WTC11 (cell line): ENCODE measurements at regions of chr18 and their contacts with region 1.

Region 1: GRCh38 chr18:623761-624620 is 27.2 kb downstream of the CLUL1 start:
- DNase-seq: peak; percentile 81
- ATAC-seq: peak; percentile 99
- H3K4me3 Mint-ChIP-seq: no peak overlapping the region
- H3K27ac Mint-ChIP-seq: no peak overlapping the region
- H3K4me1 Mint-ChIP-seq: peaks cover 9% of the 10 kb centered on the region
- H3K27me3 Mint-ChIP-seq: no peaks in the 10 kb centered on the region
- CTCF ChIP-seq: peak; percentile 36; the same call in 1 of the 2 replicates

Region 2: GRCh38 chr18:267688-268552 is 356.1 kb before region 1 on chr18 and contains the start of gene THOC1:
- CTCF ChIA-PET with region 1: interaction called, 11 read pairs
- POLR2A ChIA-PET with region 1: no interaction called
- DNase-seq: peak; percentile 95
- ATAC-seq: peak; percentile 88
- H3K4me3 Mint-ChIP-seq: peak within 1 kb of the TSS; percentile 97
- H3K27ac Mint-ChIP-seq: peak within 1 kb of the TSS; percentile 97
- H3K4me1 Mint-ChIP-seq: peaks cover 20% of the 10 kb centered on the region
- H3K27me3 Mint-ChIP-seq: no peaks in the 10 kb centered on the region
- CTCF ChIP-seq: no peak
- total RNA-seq, gene THOC1: 51.1 to 65.8 TPM (median 52.7 TPM) in 3 replicates

Region 3: DNA sequence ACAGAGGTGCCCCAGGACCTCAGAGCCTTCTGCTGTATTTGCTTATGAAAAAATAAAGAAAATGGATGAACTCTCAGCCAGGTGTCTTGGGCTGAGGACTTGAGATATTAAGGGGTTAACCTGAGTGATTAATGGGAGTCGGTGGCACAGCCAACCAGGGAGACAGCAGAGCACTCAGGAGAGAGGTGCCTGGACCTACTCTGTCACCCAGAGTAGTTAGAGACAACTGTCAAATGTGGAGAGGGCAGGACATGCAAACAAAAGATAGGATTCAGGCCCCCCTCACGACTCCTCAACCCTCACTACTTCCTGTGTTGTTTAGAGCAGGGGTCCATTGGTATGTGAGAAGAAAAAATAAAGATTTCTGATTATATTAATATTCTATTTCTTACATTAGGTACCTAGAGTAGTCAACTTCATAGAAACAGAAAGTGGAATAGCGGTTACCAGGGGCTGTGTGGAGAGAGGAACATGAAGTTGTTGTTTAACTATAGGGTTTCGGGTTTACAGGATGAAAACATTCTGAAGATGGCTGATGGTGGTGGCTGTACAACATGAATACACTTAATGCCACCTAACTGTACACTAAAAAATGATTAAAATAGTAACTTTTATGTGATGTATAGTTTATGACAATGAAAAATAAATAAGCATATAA is 72.5 kb before region 1 on chr18:
- CTCF ChIA-PET with region 1: no interaction called
- POLR2A ChIA-PET with region 1: no interaction called
- DNase-seq: no peak
- ATAC-seq: no peak
- H3K4me3 Mint-ChIP-seq: no peak overlapping the region
- H3K27ac Mint-ChIP-seq: no peak overlapping the region
- H3K4me1 Mint-ChIP-seq: 0 out of 2 replicates have a peak, but pooled peaks cover 4% of the 10 kb centered on the region
- H3K27me3 Mint-ChIP-seq: no peaks in the 10 kb centered on the region; the same call in 1 of the 2 replicates
- CTCF ChIP-seq: no peak

Region 4: DNA sequence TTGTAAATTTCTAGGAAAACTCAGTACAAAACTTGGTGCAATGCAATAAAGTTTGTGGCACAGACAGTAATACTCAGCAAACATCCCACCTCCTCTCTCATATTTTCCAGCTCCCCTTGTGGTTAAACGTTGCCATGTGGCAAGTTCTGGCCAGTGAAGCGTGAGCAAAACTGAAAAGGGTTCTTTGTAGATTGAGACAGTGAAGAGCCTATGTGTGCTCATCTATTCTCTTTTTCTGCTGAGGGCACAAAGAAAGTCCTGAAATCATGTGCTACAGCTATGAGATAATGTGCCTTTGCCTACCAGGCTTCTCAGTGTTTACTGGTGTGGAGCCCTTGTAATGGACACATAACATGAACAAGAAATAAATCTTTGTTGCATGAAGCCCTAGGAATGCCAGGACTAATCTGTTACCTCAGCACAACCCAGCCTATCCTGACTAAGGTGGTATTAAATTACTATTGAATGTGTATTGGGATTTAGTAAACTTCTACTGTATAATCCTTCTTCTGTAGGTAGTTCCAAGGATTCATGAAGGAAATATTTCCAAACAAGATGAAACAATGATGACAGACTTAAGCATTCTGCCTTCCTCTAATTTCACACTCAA is 20.5 kb after region 1 on chr18:
- CTCF ChIA-PET with region 1: interaction called, 14 read pairs
- POLR2A ChIA-PET with region 1: no interaction called
- DNase-seq: no peak
- ATAC-seq: no peak
- H3K4me3 Mint-ChIP-seq: no peak overlapping the region
- H3K27ac Mint-ChIP-seq: no peak overlapping the region
- H3K4me1 Mint-ChIP-seq: peaks cover 14% of the 10 kb centered on the region
- H3K27me3 Mint-ChIP-seq: no peaks in the 10 kb centered on the region
- CTCF ChIP-seq: no peak

Region 5: DNA sequence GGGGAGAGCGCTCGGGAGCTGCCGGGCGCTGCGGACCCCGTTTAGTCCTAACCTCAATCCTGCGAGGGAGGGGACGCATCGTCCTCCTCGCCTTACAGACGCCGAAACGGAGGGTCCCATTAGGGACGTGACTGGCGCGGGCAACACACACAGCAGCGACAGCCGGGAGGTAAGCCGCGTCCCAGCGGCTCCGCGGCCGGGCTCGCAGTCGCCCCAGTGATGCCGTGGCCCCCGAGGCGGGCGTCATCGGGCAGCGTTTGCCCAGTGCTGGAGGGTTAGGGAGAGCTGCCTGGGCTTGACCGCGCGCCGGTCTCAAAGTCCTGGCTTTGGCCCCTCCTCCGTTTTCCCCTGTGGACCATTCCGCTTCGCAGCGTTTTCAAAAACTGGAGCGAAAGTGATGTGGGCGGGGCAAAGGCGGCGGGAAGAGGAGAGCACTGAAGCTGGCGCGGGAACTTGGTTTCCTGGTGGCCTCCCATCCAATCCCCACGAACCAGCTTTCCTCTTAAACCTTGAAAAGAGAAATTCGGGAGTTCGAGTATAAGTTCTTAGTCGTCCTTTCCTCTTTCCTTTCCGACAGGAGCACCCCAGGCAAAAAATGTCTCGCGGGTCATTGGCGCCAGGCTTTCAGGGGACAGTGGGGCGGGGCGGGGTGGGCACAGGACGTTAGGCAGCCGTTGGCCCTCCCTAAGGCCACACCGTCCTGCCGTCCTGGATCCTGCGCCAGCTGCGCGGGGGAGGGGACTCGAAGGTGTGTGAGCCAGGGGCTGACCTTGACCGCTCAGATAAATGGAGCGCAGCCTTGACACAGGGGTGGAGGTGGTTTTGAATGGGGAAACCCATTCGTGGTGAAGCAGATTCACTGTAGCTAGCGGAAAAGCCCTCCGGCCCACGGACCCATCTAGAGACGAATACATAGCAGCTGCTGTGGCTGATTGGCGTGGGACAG is 34.3 kb after region 1 on chr18:
- CTCF ChIA-PET with region 1: interaction called, 30 read pairs
- POLR2A ChIA-PET with region 1: interaction called, 3 read pairs
- DNase-seq: peak; percentile 90
- ATAC-seq: peak; percentile 80
- H3K4me3 Mint-ChIP-seq: peak overlapping the region; percentile 88
- H3K27ac Mint-ChIP-seq: peak overlapping the region; percentile 76
- H3K4me1 Mint-ChIP-seq: peaks cover 40% of the 10 kb centered on the region
- H3K27me3 Mint-ChIP-seq: no peaks in the 10 kb centered on the region
- CTCF ChIP-seq: no peak

Region 6: DNA sequence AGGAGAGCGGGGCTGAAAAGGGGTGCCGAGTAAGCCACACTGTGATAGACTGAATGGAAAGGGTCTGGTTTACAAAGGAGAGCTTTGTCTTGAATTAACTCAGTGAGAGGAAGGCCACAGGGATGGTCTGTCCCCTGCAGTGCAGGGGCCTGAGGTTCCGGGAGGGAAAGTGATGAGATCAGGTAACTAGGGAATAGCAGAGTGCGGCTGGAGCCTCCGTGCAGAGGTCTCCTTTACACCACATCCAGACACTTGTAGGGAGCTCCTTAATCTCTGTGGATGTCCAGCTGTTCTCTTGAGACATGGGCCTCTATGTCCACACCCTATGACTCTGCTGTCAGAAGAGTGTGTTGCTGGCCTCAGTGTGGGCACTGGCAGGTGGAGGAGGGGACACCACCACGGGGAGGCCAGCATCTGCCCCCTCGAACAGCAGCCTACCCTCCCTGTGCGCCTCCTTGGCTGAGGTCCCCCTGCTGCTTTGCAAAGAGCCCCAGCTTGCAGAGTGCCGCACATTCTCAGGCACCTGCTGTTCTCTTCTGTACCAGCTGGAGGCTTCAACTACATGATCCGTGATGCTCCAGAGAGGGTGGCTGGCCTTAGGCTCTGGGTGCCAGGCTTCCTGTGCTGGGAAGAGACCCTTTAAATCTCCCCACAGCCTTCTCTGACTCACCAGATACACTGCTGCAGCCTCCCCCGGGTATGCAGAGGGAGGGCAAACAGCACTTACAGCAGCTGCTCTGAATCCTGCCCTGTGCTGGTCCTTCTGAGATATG is 62.5 kb after region 1 on chr18:
- CTCF ChIA-PET with region 1: interaction called, 11 read pairs
- POLR2A ChIA-PET with region 1: no interaction called
- DNase-seq: peak; percentile 54
- ATAC-seq: peak; percentile 88
- H3K4me3 Mint-ChIP-seq: peak overlapping the region; percentile 30
- H3K27ac Mint-ChIP-seq: peak overlapping the region; percentile 44
- H3K4me1 Mint-ChIP-seq: peaks cover 35% of the 10 kb centered on the region
- H3K27me3 Mint-ChIP-seq: no peaks in the 10 kb centered on the region
- CTCF ChIP-seq: no peak